Cardiac septum (tissue), 1 donor: ENCODE measurements at regions of chr15 and their contacts with region 1.

Region 1: DNA sequence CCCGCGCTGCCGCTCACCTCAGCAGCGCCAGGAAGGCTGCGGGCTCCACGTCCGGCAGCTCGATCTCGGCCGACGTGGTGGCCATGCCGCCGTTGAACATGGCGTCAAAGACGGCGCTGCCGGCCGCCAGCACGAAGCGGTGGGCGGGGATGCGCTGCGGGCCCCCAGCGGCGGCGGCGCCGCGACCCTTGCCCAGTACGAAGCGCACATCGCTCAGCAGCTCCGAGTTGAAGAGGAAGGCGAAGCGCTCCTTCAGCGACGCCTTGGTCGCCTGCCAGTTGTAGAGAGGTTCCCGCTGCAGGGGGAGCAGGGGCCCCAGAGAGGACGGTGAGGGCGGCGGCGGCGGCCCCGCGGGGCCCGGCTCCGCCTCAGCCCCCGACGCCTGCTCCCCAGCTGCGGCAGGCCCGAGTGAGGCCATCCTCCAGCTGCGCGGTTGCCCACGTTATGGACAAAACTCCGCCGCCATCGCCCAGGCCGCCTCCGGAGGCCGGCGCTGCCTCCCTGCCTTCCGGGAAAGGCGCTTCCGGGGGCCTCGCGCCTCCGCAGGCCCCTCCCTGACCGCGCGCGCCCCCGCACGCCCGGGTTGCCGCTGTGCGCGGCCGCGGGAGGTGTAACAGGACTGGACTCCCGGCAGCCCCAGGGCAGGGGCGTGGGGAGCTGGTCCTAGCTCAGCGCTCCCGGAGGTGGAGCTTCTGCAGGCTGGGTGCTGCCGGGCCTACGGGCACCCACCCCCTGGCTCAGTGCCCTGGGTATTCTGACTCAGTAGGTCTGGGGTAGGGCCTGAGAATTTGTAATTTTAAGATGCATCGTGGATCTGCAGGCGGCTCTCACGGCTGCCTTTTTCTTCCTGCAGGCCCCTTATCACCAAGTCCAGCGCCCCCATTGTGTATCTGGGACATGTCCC is at the start of gene BTBD1:
- DNase-seq: peak; percentile 96
- total RNA-seq, gene BTBD1: 128 TPM

Region 2: DNA sequence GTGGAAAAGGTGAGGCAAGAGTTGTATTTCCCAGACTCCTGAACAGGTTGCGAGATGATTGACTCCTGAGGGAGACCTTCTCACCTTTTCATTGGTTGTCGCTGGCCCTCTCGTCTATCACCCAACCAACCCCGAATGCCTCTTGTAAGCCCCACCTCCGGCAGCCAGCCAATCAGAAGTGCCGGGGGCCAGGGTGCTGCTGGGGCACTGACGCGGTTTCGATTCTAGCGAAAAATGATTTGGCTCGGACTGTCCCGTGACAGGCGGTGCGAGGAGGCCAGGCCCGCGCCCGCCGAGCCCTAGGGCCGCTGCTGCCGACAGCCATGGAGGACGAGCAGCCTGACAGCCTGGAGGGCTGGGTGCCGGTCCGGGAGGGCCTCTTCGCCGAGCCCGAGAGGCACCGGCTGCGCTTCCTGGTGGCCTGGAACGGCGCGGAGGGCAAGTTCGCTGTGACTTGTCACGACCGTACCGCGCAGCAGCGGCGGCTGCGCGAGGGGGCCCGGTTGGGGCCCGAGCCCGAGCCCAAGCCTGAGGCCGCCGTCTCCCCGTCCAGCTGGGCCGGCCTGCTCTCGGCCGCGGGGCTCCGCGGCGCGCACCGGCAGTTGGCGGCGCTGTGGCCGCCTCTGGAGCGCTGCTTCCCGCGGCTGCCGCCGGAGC is 257.5 kb before region 1 on chr15 and contains the start of gene WHAMM:
- intact Hi-C with region 1: loop called (anchors 5 kb)
- DNase-seq: peak; percentile 99
- total RNA-seq, gene WHAMM: 7.2 TPM

Region 3: DNA sequence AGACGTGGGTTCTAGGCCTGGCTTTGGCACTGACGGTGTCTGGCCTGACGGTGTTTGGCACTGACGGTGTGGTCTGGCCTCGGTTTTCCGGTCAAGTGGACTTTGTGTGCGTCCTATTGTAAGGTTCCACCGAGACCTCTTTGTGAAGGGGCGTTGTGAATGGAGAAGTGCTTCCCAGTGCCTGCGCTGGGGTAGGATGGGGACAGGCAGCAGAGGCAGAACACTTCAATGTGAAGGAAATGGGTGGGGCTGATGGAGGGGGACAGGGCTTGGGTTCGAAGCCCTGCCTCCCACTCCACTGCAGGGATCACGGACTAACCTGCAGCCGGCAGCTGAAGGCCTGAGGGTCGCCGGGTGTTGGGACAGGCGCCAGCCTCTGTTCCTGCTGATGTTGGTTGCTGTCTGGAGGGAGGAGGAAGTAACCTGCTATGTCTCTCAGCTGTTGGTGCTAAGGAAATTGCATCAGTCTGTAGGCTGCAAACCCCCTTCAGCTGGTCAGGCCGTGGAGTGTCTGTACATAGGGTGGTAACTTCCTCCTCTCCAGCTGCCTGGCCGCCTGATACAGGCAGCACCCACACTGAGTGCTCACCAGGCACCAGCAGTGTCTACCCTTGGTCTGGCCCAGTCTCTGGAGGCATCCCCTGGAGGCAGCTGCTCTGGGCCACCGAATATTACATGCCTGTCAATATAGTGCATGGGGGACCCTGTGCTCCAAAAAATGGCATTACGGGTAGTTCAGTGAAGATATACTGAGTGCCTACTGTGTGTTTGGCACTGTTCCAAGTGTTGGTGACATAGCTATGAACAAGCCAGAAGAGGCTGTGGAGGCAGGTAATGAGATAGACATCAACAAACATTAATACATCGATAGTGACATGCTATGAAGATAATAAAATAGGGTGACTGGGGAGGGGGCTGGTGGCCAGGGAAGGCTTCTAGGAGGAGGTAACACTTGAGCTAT is 41.6 kb after region 1 on chr15:
- intact Hi-C with region 1: loop called (anchors 5 kb)
- DNase-seq: peak; percentile 88

Region 4: GRCh38 chr15:83207622-83208411 is 140.8 kb after region 1 on chr15 and contains the start of gene HDGFL3:
- intact Hi-C with region 1: loop called (anchors 1 kb)
- DNase-seq: peak; percentile 83
- total RNA-seq, gene HDGFL3: 50.5 TPM

Region 5: GRCh38 chr15:83474578-83474977 is 407.6 kb after region 1 on chr15:
- intact Hi-C with region 1: no loop called
- DNase-seq: no peak